Endothelial cell of umbilical vein (primary cell): ENCODE measurements at regions of chr4 and their contacts with region 1.

Region 1: GRCh38 chr4:63541828-63542227 is 867.4 kb downstream of the TECRL start:
- DNase-seq: no peak
- H3K4me3 ChIP-seq: no peak overlapping the region
- H3K27ac ChIP-seq: no peak overlapping the region
- H3K4me1 ChIP-seq: no peaks in the 10 kb centered on the region
- H3K27me3 ChIP-seq: no peaks in the 10 kb centered on the region
- CTCF ChIP-seq: no peak
- POLR2A ChIP-seq: no peak

Region 2: GRCh38 chr4:63529581-63530337 is 12.1 kb before region 1 on chr4:
- CTCF ChIA-PET with region 1: no interaction called
- POLR2A ChIA-PET with region 1: no interaction called
- dilution Hi-C with region 1: no loop called
- intact Hi-C with region 1: loop called (anchors 2 kb)
- DNase-seq: no peak
- H3K4me3 ChIP-seq: no peak overlapping the region
- H3K27ac ChIP-seq: no peak overlapping the region
- H3K4me1 ChIP-seq: no peaks in the 10 kb centered on the region
- H3K27me3 ChIP-seq: no peaks in the 10 kb centered on the region
- CTCF ChIP-seq: no peak
- POLR2A ChIP-seq: no peak